CD4-positive, alpha-beta T cell (primary cell): ENCODE measurements at regions of chr12 and their contacts with region 1.

Region 1: GRCh38 chr12:6825398-6826124 is 2.6 kb upstream of the P3H3 start:
- DNase-seq: peak; percentile 71 to 90 (median 80)
- ATAC-seq: peak; percentile 65
- H3K4me3 ChIP-seq: no peak overlapping the region
- H3K4me3 Mint-ChIP-seq: peak overlapping the region; percentile 5
- H3K27ac ChIP-seq: no peak overlapping the region
- H3K27ac Mint-ChIP-seq: no peak overlapping the region
- H3K4me1 ChIP-seq: peaks cover 51% of the 10 kb centered on the region
- H3K4me1 Mint-ChIP-seq: peaks cover 26% of the 10 kb centered on the region
- H3K27me3 ChIP-seq: peaks cover 19 to 29% of the 10 kb centered on the region in 2 experiments
- H3K27me3 Mint-ChIP-seq: peaks cover 32% of the 10 kb centered on the region
- CTCF ChIP-seq: peak; percentile 94

Region 2: GRCh38 chr12:6613776-6614512 is 211.6 kb before region 1 on chr12:
- CTCF ChIA-PET with region 1: no interaction called
- POLR2A ChIA-PET with region 1: interaction called, 5 read pairs
- intact Hi-C with region 1: loop called (anchors 1 to 2 kb)
- DNase-seq: peak in 9 of 14 experiments; percentile 16 to 84 (median 46)
- ATAC-seq: peak; percentile 36
- H3K4me3 ChIP-seq: no peak overlapping the region
- H3K4me3 Mint-ChIP-seq: peak overlapping the region; percentile 31
- H3K27ac ChIP-seq: peak overlapping the region; percentile 40 to 47
- H3K27ac Mint-ChIP-seq: peak overlapping the region; percentile 84
- H3K4me1 ChIP-seq: peaks cover 43% of the 10 kb centered on the region
- H3K4me1 Mint-ChIP-seq: peaks cover 47% of the 10 kb centered on the region
- H3K27me3 ChIP-seq: no peaks in the 10 kb centered on the region
- H3K27me3 Mint-ChIP-seq: no peaks in the 10 kb centered on the region
- CTCF ChIP-seq: no peak

Region 3: GRCh38 chr12:6723607-6724396 is 101.8 kb before region 1 on chr12 and contains the start of gene COPS7A:
- CTCF ChIA-PET with region 1: no interaction called
- POLR2A ChIA-PET with region 1: interaction called, 13 read pairs
- intact Hi-C with region 1: no loop called
- DNase-seq: peak; percentile 81 to 99 (median 93)
- ATAC-seq: peak; percentile 84
- H3K4me3 ChIP-seq: peak within 1 kb of the TSS; percentile 59
- H3K4me3 Mint-ChIP-seq: peak within 1 kb of the TSS; percentile 87
- H3K27ac ChIP-seq: peak within 1 kb of the TSS; percentile 68 to 88
- H3K27ac Mint-ChIP-seq: peak within 1 kb of the TSS; percentile 83
- H3K4me1 ChIP-seq: peaks cover 18% of the 10 kb centered on the region
- H3K4me1 Mint-ChIP-seq: peaks cover 28% of the 10 kb centered on the region
- H3K27me3 ChIP-seq: no peaks in the 10 kb centered on the region
- H3K27me3 Mint-ChIP-seq: no peaks in the 10 kb centered on the region
- CTCF ChIP-seq: no peak
- total RNA-seq, gene COPS7A: 9.4 to 9.6 TPM

Region 4: GRCh38 chr12:6792522-6793201 is 32.9 kb before region 1 on chr12:
- CTCF ChIA-PET with region 1: interaction called, 3 read pairs
- POLR2A ChIA-PET with region 1: interaction called, 18 read pairs
- intact Hi-C with region 1: loop called in 1 of 2 experiments (anchors 5 kb)
- DNase-seq: peak in 12 of 14 experiments; percentile 41 to 75 (median 58)
- ATAC-seq: peak; percentile 69
- H3K4me3 ChIP-seq: peak overlapping the region; percentile 66
- H3K4me3 Mint-ChIP-seq: peak overlapping the region; percentile 96
- H3K27ac ChIP-seq: peak overlapping the region; percentile 72 to 81
- H3K27ac Mint-ChIP-seq: peak overlapping the region; percentile 93
- H3K4me1 ChIP-seq: peaks cover 79% of the 10 kb centered on the region
- H3K4me1 Mint-ChIP-seq: peaks cover 80% of the 10 kb centered on the region
- H3K27me3 ChIP-seq: no peaks in the 10 kb centered on the region
- H3K27me3 Mint-ChIP-seq: no peaks in the 10 kb centered on the region
- CTCF ChIP-seq: no peak